Left lung (tissue), 14 donors: ENCODE measurements at regions of chr2 and their contacts with region 1.

Region 1: DNA sequence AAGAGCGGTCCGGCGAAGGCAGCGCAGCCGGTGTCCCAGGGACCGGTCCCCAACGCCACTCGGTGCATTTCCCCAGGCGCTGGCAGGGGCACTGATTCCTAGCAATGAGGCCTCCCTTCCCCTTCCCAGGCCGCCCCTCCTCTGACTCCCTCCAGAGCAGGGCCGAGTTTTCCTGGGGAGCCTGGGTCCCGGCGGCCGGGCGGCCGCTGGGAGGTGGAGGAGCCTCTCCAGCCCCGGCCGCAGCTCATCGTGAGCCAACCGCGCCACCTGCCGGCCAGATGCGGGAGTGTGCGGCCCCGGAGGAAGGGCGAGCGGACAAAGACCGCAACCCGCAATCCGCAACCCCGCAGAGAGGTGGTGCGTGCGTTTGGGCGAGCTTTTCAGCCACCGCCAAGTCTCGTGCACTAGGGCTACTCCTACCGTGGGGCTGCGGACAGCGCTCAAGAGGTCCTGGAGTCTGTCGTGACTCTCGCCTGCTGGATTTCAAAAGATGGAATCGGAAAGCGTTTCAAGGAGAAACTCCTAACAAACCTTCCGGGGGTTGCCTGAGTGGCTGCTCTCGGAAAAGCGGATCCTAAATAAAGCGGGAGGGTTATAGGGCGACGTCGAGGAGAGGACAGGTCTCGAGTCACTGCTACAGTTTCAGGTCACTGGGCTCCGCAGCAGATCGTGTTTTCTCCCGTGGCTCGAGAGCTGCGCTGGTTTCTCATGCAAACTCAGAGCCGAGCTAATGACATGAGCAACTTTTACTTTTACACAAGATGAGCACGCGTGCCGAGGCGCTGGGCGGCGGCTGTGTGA is 1.5 kb upstream of the EPHA4 start:
- DNase-seq: peak; percentile 82 to 96 (median 90)
- ATAC-seq: peak; percentile 82
- H3K4me3 ChIP-seq: peak overlapping the region; percentile 60 to 66
- H3K27ac ChIP-seq: peak overlapping the region; percentile 80 to 82
- H3K4me1 ChIP-seq: peaks cover 0 to 29% of the 10 kb centered on the region in 2 donors
- H3K27me3 ChIP-seq: peaks cover 20 to 83% of the 10 kb centered on the region in 2 donors
- CTCF ChIP-seq: peak; percentile 91 to 98

Region 2: GRCh38 chr2:220687231-220687843 is 886.3 kb before region 1 on chr2:
- intact Hi-C with region 1: loop called in 1 of 2 experiments (anchors 5 kb)
- DNase-seq: peak in 3 of 4 donors; percentile 44 to 67 (median 49)
- ATAC-seq: peak; percentile 98
- H3K4me3 ChIP-seq: no peak overlapping the region
- H3K27ac ChIP-seq: no peak overlapping the region
- H3K4me1 ChIP-seq: no peaks in the 10 kb centered on the region
- H3K27me3 ChIP-seq: no peaks in the 10 kb centered on the region
- CTCF ChIP-seq: peak; percentile 73 to 92

Region 3: DNA sequence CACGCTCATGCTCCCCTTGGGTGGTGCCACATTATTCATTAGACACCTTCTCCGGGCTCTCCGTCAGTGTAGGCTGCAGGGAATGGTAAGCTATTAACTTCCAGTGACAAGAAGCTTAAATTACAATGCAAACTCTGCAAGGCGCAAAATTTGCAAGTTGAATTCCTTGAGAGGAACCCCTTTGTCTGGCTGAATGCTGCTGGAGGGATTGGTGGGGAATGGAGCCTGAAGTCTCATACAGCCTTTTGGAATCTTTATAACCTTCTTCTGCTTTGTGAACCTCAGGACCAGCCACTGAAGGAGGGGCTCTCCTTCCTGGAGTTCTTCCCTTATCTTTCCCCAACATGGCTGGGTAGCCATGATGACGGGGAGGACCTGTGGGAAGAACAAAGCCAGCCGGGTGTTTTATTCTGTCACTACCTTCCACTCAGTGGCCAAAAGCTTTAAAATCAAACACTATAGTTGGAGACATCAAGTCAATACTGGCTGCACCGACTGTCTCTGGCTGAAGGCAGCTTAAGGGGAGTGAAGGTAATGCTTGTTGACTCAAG is 219.4 kb after region 1 on chr2:
- intact Hi-C with region 1: no loop called
- DNase-seq: peak in 1 of 4 donors; percentile 13
- ATAC-seq: no peak
- H3K4me3 ChIP-seq: no peak overlapping the region
- H3K27ac ChIP-seq: no peak overlapping the region
- H3K4me1 ChIP-seq: no peaks in the 10 kb centered on the region
- H3K27me3 ChIP-seq: no peaks in the 10 kb centered on the region
- CTCF ChIP-seq: no peak